ENCODE measurements at regions of chr1 and their contacts with region 1.

Region 1: DNA sequence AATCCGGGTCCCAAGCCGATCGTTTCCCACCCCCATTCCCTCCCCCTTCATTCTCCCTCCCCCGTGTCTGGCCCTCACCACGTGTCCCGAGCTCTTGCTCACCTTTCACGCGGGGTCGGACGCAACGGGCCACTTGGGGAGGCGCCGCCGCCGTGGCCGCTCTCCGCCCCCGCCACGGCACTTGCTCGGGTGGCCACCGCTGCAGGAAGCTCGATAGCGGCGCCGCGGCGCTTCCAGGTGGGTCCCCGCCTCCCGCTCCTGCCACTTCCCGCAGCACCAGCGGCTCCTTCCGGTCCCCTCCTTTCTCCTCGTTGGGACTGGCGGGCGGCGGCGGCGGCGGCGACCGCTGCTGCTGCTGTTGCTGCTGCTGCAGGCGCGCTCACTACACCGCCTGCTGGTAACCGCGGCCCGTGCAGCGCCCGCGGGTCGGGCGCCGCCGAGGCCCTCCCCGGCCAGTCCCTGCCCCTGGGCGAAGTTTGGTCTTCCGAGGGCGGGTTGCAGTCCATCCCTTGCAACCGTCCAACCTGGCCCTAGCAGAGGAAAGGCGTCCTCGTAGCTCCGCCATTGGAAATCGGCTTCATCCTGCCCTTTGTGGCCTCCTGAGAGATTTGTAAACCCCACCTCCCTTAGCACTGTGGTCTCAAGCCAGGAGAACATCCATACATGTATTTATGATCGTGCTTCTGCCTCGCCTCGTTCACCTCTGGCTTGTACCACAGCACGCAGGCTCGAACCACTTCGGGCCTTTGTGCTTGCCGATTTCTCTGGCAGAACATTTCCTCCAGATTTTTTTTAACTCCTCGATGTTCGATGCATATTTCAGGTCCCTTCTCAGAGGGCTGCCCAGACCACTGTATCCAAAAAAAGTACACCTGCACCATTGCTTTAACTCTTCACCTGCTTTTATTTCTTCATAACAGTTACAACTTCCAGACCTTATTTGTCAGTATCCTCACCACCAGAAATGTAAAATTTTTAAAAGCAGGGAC is 996 bp upstream of the ZZZ3 start:
- DNase-seq: peak; percentile 96
- H3K4me3 ChIP-seq: peak overlapping the region; percentile 99
- H3K27ac ChIP-seq: peak overlapping the region; percentile 96
- H3K4me1 ChIP-seq: peaks cover 41% of the 10 kb centered on the region
- H3K27me3 ChIP-seq: no peaks in the 10 kb centered on the region

Region 2: GRCh38 chr1:76154206-76154956 is 1529.1 kb before region 1 on chr1:
- in situ Hi-C with region 1: loop called (anchors 25 kb)
- DNase-seq: peak; percentile 82
- H3K4me3 ChIP-seq: peak overlapping the region; percentile 80
- H3K27ac ChIP-seq: no peak overlapping the region
- H3K4me1 ChIP-seq: peaks cover 4% of the 10 kb centered on the region; the same call in 1 of the 2 replicates
- H3K27me3 ChIP-seq: no peaks in the 10 kb centered on the region

Region 3: GRCh38 chr1:77156214-77156613 is 527.2 kb before region 1 on chr1:
- in situ Hi-C with region 1: loop called (anchors 10 kb)
- DNase-seq: no peak
- H3K4me3 ChIP-seq: no peak overlapping the region
- H3K27ac ChIP-seq: no peak overlapping the region
- H3K4me1 ChIP-seq: no peaks in the 10 kb centered on the region
- H3K27me3 ChIP-seq: no peaks in the 10 kb centered on the region

Region 4: DNA sequence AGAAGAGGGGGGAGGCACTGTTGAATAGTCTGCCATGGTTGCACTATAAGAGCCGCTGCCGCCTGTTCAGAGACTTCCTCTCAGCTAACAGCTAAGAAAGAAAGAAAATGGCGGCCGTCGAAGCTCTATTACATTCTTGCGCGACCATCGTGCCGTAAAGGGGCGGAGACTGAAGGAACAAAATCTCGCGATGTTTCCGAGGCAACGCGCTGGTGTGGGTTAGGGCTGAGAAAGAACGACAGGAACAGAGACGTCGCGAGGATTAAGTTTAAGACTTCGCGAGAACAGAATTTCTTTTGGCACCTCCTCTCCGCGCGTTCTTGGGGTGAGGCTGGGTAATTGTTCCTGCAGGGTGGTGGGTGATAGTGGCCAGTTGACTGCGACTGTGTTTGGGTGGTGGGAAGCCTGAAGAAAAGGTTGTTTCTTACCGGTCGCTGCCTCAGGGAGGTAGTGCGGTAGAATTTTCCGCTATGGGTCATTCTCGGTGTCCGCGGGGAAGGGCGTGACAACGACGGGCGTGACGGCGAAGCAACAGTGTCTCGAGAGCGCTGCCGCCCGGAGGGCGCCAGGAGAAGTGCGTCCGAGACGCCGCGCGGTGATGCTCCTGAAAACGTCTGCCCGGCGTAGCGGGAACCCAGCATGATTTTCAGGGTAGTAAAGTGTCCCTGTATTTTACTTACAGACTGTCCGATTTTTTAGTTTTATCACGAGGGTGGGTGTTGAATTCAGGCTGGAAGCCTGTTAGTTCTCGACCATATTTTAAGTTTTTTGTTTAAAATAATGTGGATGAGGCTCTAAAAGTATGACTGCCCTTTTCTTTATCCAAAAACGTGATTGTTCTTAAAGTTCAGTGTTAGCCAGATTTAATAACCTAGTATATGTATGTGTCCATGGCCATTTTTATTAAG is 295.8 kb after region 1 on chr1 and contains the start of gene FUBP1:
- in situ Hi-C with region 1: no loop called
- DNase-seq: peak; percentile 100
- H3K4me3 ChIP-seq: peak within 1 kb of the TSS; percentile 96
- H3K27ac ChIP-seq: peak within 1 kb of the TSS; percentile 98
- H3K4me1 ChIP-seq: peaks cover 42% of the 10 kb centered on the region
- H3K27me3 ChIP-seq: no peaks in the 10 kb centered on the region
- total RNA-seq, gene FUBP1: 59.1 and 69.9 TPM in 2 replicates

Region 5: GRCh38 chr1:79224537-79224936 is 1541.1 kb after region 1 on chr1:
- in situ Hi-C with region 1: no loop called
- DNase-seq: no peak
- H3K4me3 ChIP-seq: no peak overlapping the region
- H3K27ac ChIP-seq: no peak overlapping the region
- H3K4me1 ChIP-seq: no peaks in the 10 kb centered on the region
- H3K27me3 ChIP-seq: no peaks in the 10 kb centered on the region